Uterus (tissue), 4 donors: ENCODE measurements at regions of chr7 and their contacts with region 1.

Region 1: DNA sequence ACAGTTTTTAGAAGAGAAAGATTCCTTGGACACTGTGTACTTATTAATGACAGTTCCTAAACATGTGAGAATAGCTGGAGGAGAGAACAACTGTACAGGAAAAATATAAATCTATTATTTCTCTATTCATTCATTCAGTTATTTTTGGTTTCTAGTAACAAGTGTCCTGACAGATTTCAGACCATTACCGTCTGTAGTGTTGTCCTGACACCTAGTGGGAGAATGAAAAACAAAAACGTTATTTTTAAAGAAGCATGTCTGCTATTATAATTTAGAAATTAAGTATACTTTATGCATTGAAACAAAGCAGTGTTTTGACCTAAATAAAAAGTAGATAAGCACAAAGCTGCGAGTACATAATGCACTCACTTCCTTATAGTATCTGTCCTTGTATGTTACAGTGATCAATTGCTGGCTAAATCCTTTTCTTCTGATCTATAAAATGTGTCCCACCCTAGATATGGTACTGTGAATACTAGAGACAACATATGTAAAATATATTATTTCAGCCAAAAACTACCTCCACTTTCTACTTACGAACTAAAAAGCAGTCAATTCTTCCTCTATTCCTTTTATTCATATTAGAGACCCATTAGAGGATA is 575.6 kb downstream of the ARL4A start:
- DNase-seq: no peak
- H3K4me3 ChIP-seq: no peak overlapping the region
- H3K27ac ChIP-seq: no peak overlapping the region
- H3K4me1 ChIP-seq: no peaks in the 10 kb centered on the region
- H3K27me3 ChIP-seq: no peaks in the 10 kb centered on the region
- CTCF ChIP-seq: peak; percentile 56 to 69 (median 64)
- POLR2A ChIP-seq: no peak

Region 2: DNA sequence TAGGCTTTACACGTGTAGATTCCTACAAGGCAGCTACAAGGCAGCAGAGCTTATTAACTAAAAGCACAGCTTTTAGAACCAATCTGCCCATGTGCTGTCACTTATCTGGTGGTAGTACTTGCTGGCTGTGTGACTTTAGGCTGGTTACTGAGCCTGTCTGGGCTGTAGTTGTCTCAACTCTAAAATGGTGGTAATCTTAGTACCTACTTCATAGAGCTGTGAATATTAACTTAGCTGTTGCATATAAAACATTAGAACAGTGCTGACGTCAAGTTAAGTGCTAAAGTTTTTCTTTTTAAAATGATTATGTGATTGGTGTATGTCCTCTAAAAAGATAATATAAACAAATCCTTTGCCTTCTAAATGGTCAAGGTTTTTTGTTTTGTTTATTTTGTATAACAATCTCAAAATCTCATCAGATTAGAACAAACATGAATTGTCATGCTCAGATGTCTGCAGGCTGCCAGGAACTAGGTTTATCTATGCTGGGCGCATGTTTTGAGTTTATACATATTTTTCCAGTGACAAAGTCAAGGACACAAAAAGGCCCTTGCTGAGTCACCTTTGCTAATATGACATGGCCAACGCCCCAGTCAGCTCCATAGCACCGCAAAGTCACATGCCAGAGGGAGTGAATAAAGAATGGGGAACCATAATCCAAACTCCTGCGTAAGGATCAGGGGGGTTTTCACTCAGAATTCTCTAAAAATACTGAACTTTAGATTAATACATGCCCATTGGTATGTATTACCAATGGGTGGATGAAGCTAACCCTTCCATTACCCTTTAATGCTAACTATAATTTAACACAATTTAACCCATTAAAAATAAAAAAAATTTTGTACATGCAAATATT is 615.4 kb before region 1 on chr7:
- intact Hi-C with region 1: loop called (anchors 10 kb)
- DNase-seq: no peak
- H3K4me3 ChIP-seq: no peak overlapping the region
- H3K27ac ChIP-seq: no peak overlapping the region
- H3K4me1 ChIP-seq: no peaks in the 10 kb centered on the region
- H3K27me3 ChIP-seq: no peaks in the 10 kb centered on the region
- CTCF ChIP-seq: no peak
- POLR2A ChIP-seq: no peak